Head of caudate nucleus (tissue), 42 donors: ENCODE measurements at regions of chr3 and their contacts with region 1.

Region 1: GRCh38 chr3:122679085-122679881 is 1.4 kb upstream of the PARP14 start:
- DNase-seq: peak; percentile 66 to 92 (median 79)

Region 2: GRCh38 chr3:122392868-122393844 is 286.1 kb before region 1 on chr3:
- intact Hi-C with region 1: loop called (anchors 5 kb)
- DNase-seq: peak in 5 of 42 donors; percentile 9 to 42 (median 21)